Left cardiac atrium (tissue), 4 donors: ENCODE measurements at regions of chr1 and their contacts with region 1.

Region 1: GRCh38 chr1:116679091-116679827 is 11.7 kb upstream of the IGSF3 start:
- DNase-seq: no peak
- ATAC-seq: no peak

Region 2: DNA sequence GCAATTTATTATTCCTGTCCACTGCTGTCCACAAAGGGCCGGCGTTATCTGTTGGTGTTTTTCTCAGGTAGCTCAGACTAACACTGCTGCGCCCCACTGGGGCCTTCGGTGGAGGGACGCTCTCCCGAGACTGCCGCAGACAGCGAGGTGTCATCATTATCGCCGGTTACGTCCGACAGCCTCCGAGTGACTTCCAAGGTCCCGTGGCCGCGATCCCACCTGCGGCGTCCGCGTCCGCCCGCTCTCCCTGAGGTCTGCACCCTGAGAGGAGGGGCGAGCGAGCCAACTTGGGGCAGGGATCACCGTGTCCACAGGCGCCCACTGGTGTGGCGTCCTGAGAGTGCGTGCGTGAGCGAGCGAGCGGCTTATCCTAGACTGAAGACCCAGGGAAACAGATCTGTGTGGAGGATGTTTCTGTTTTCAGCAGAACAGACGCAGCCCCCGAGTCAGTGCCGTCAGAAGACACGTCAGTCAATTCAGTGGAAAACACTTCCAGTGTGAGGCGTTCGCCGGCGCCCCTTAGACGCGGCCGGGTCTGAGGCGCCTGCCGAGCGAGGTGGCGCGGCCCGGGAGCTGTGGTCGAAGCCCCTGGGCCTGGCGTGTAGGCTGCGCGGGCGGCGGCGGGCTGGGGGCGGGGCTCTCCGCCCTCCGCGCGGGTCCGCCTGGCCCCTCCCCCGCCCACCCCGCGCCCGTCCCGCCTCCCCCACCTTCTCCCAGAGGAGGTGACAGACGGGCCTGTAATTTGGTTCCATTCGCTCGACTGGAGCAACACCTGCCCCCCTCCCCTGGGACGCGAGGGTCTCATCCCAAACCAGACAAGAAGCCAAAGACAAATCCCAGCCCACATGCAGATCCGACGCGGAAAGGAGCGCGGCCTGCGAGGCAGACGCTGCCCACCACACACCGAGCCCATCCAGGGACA is 850.9 kb before region 1 on chr1:
- intact Hi-C with region 1: no loop called
- DNase-seq: peak; percentile 35
- ATAC-seq: peak; percentile 81 to 84

Region 3: DNA sequence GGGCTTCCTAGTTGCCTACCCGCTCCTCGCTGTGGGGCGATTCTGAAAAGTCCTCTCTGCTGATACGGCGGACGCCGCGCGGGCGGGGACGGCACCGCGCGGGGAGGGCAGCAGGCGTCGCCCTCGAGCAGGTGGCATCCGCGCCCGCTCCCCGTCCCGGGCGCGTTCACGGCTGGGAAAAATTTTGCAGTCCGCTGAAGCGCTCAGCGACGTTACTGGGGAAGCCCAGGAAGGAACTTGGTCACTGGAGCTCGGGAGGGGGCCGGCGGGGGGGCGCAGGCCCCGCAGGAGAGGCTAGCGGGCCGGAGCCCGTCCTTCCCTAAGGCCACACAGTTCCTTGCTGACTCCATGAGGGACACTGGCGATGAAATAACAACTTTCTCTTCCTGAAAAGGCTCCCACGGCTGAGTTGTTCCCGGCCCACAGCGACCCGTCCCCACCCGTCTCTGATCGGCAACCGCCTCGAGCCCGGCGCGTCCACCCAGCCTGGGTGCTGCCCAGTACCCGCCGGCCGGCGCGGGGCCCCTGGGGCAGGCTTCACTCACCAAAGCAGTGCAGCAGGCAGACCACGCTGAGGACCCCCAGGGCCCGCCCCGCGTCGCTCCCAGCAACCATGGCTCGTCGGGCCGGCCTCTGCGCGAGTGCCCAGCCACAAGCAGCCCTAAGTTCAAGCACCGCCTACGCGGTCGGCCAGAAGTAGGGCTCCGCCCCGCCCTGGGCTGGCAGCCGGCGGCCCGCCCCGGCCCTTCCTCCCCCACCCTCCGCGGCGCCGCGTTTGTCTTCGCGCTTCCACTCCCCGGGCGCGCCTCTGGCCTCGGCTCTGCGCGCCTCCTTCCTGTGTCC is 108.7 kb before region 1 on chr1 and contains the start of gene CD58:
- intact Hi-C with region 1: loop called in 1 of 2 experiments (anchors 10 kb)
- DNase-seq: peak; percentile 94
- ATAC-seq: peak; percentile 94
- total RNA-seq, gene CD58: 19.6 to 21.1 TPM